Activated T-helper 1 cell treated with anti-CD3 and anti-CD28 coated beads, Interleukin-12 subunit alpha, Interleukin-12 subunit beta, Interleukin-2, Interleukin-4 antibody, amounts not matched to agents 30 ng/mL and 10 ng/mL and 1 ng/mL, durations not matched to agents 14 hours and 24 hours and 36 hours (primary cell): ENCODE measurements at regions of chr3 and their contacts with region 1.

Region 1: DNA sequence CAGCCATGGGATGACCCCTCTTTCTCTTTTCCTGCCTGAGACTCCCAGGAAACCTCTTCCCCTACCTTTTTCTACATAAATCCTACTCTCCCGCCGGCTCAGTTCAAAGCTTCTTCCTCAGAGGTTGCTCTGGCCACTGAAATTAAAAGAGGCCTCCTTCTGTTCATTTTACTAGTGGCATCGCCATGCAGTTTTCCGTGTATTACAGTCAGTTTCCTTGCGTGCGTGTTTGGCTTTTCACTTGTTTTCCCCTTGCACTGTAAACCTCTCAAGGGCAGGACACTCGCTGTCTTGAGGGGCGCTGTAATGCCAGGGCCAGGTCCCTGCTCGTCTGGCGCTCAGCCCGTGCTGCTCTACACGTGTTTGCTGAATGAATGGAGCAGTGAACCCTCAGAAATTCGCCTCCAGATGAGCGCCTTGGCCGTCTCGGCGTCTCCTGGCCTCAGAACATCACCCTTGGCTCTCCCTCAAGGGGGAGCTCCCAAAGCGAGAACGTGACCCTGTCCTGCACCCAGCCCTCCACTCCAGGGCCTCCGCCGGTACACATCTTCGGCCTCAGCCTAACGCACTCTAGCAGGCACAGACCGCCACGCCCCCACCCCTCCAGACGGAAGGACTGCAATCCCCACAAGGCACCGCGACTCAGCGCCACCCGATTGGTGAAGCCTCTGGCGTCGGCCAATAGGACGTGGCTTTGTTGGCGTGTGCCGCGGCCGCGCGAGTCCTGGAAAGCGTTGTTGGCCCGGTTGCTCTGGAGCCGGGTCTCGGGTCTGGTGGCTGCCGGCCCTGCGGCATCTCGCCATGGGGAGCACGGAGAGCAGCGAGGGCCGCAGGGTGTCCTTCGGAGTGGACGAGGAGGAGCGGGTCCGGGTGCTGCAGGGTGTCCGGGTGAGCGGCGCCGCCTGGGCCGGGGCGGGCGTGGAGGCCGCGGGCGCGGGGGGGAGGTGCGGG is at the start of gene CHCHD6:
- DNase-seq: peak; percentile 92
- H3K4me3 Mint-ChIP-seq: peak within 1 kb of the TSS; percentile 96
- H3K27ac Mint-ChIP-seq: peak within 1 kb of the TSS; percentile 85
- H3K4me1 Mint-ChIP-seq: peaks cover 24% of the 10 kb centered on the region
- H3K27me3 Mint-ChIP-seq: peaks cover 40% of the 10 kb centered on the region
- total RNA-seq, gene CHCHD6: 15.7 and 17.5 TPM in 2 replicates

Region 2: GRCh38 chr3:125594581-125595011 is 1109.2 kb before region 1 on chr3:
- intact Hi-C with region 1: loop called (anchors 5 kb)
- DNase-seq: peak; percentile 1
- H3K4me3 Mint-ChIP-seq: peak overlapping the region; percentile 95
- H3K27ac Mint-ChIP-seq: peak overlapping the region; percentile 88
- H3K4me1 Mint-ChIP-seq: peaks cover 28% of the 10 kb centered on the region
- H3K27me3 Mint-ChIP-seq: no peaks in the 10 kb centered on the region

Region 3: DNA sequence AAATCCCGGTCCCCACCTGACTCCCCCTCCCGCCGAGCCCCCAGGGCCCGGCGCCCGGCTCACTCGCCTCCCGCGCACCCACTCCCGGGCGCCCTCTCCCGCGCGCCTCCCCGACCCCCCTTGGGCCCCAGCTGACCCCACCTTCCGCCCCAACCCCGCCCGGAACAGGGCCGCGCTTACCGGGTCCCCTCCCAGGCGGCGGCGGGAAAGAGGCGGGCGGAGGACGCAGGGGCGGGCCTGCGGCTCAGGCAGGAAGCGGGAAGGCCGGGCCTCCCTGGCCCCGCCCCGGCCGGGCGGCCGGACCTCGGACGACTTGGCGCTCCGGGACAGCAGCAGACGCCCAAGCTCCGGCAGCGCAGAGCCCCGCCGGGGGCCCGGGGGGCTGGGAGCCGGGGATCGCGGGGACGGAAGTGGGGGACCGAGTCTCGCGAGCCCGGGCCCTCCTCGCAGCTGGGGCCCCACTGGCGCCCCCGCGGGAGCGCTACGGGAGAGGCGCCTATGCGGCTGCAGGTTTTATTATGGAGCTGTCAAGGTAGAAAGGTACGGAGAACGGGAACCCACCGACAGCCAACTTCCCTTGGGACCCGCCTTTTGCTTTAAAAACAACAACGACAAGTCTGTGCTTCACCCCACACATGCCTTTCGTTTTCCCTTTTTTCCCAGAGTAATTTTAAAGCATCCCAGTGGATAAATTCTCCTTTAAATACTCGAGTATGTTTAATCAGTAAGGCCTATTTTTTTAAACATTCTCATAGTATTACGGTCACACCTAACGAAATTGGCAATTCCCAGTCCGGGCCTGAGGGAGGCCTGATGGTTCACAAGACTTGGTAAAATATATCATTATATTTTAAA is 619.6 kb before region 1 on chr3 and contains the start of gene SLC41A3:
- intact Hi-C with region 1: loop called (anchors 10 kb)
- DNase-seq: peak; percentile 90
- H3K4me3 Mint-ChIP-seq: peak within 1 kb of the TSS; percentile 93
- H3K27ac Mint-ChIP-seq: peak within 1 kb of the TSS; percentile 89
- H3K4me1 Mint-ChIP-seq: peaks cover 26% of the 10 kb centered on the region
- H3K27me3 Mint-ChIP-seq: no peaks in the 10 kb centered on the region
- total RNA-seq, gene SLC41A3: 17.3 and 23.4 TPM in 2 replicates

Region 4: DNA sequence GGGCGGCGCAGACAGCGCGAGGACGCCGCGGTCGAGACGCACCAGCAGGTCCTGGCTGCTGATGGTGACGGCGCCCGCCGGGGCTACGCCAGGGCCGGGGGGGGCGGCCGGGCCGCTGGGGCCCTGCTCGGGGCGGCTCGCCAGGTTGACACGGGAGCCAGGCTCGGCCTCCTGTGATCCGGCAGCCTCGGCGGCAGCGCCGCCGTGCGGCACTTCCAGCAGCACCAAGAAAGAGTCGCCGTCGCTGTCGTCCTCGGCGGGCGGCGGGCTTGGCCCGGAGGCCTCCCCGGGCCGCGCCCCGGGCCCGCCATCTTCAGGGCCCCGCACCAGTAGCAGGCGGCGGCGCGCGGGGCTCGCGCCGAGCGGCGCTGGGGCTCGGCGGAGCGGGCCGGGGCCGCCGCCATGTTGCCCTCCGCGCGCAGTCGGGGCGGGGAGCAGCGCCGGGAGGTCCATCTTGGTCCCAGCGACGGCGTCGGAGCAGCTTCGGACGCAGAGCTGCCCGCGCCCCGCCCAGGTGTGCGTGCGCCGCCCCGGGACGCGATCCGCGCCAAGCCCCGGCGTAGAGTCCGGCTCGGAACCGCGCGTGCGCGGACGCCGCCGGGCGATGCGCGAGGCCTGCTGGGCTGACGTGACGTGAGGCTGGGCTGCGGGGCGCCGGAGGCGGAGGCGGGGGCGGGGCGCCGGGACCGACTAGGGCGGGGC is 228.2 kb before region 1 on chr3 and contains the start of gene ZXDC:
- intact Hi-C with region 1: loop called (anchors 2 kb)
- DNase-seq: peak; percentile 92
- H3K4me3 Mint-ChIP-seq: peak within 1 kb of the TSS; percentile 93
- H3K27ac Mint-ChIP-seq: peak within 1 kb of the TSS; percentile 88
- H3K4me1 Mint-ChIP-seq: peaks cover 28% of the 10 kb centered on the region
- H3K27me3 Mint-ChIP-seq: peaks cover under 1% of the 10 kb centered on the region
- total RNA-seq, gene ZXDC: 29.2 and 29.4 TPM in 2 replicates

Region 5: DNA sequence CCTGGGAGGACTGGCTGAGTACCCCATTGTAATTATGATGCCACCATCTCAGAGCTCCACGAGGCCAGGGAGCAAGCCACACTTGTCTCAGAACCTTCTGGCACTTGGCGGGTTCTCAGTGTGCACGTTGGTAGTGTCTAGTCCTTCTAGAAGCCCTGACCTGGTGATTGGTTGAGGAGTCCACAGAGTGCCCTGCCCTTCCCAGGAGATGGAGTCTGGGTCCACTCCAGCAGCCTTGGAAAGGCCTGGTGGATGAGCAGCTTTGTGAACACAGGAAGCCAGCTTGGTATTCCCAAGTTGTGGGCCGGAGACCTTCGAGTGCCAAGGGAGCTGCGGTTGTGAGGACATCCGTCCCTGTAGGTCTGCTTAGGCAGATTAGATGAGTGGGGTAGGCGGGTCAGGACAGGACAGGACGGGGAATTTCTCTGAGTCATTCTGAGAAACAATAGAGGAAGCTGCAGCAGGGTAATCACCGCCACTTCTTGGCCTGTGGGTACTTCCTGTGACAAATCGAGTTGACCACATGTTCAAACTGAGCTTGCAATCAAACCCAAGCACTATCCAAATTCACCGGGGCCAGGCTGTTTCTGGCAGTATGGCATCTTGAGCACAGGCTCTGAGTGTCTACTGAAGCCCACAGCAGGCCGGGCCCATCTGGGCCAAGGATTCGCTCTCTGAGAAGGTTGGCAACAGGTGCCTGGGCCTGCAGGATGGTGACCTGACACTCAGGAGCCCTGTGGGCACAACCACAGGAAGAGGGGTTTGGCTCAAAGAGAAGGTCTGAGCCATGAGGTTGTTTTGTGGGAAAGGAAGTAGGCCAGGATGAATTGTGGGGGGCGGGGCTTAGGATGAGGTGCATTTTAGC is 207.6 kb after region 1 on chr3:
- intact Hi-C with region 1: loop called (anchors 1 kb)
- DNase-seq: peak; percentile 81
- H3K4me3 Mint-ChIP-seq: peak overlapping the region; percentile 67
- H3K27ac Mint-ChIP-seq: peak overlapping the region; percentile 73
- H3K4me1 Mint-ChIP-seq: peaks cover 62% of the 10 kb centered on the region
- H3K27me3 Mint-ChIP-seq: no peaks in the 10 kb centered on the region

Region 6: GRCh38 chr3:127544192-127544802 is 840.5 kb after region 1 on chr3:
- intact Hi-C with region 1: loop called (anchors 10 kb)
- DNase-seq: peak; percentile 44
- H3K4me3 Mint-ChIP-seq: no peak overlapping the region
- H3K27ac Mint-ChIP-seq: no peak overlapping the region
- H3K4me1 Mint-ChIP-seq: peaks cover 6% of the 10 kb centered on the region
- H3K27me3 Mint-ChIP-seq: peaks cover 16% of the 10 kb centered on the region

Region 7: GRCh38 chr3:128051837-128052594 is 1348.2 kb after region 1 on chr3 and contains the start of gene SEC61A1:
- intact Hi-C with region 1: loop called (anchors 2 kb)
- DNase-seq: peak; percentile 96
- H3K4me3 Mint-ChIP-seq: peak within 1 kb of the TSS; percentile 99
- H3K27ac Mint-ChIP-seq: peak within 1 kb of the TSS; percentile 96
- H3K4me1 Mint-ChIP-seq: peaks cover 43% of the 10 kb centered on the region
- H3K27me3 Mint-ChIP-seq: peaks cover 6% of the 10 kb centered on the region
- total RNA-seq, gene SEC61A1: 205 and 214 TPM in 2 replicates